Motor neuron (in vitro differentiated cells): ENCODE measurements at regions of chr6 and their contacts with region 1.

Region 1: GRCh38 chr6:156776840-156777576 is at the start of gene ARID1B:
- ATAC-seq: peak; percentile 54 to 67 (median 64)
- H3K4me3 ChIP-seq: peak within 1 kb of the TSS; percentile 65 to 98 (median 95)
- H3K27ac ChIP-seq: peak within 1 kb of the TSS; percentile 98 to 99
- H3K4me1 ChIP-seq: peaks cover 24 to 26% of the 10 kb centered on the region in 2 donors
- total RNA-seq, gene ARID1B: 35.8 to 165 (median 54.9) TPM

Region 2: GRCh38 chr6:156662025-156662445 is 115.0 kb before region 1 on chr6:
- in situ Hi-C with region 1: no loop called
- ATAC-seq: peak in 3 of 8 experiments; percentile 37 to 74 (median 65)
- H3K4me3 ChIP-seq: no peak overlapping the region
- H3K27ac ChIP-seq: no peak overlapping the region
- H3K4me1 ChIP-seq: peaks cover 13 to 16% of the 10 kb centered on the region in 2 donors

Region 3: GRCh38 chr6:156933201-156934068 is 156.4 kb after region 1 on chr6:
- in situ Hi-C with region 1: loop called in 1 of 9 experiments (anchors 25 kb)
- ATAC-seq: peak in 6 of 8 experiments; percentile 50 to 96 (median 96)
- H3K4me3 ChIP-seq: peak overlapping the region in 1 of 5 donors; percentile 14
- H3K27ac ChIP-seq: peak overlapping the region in 1 of 2 donors; percentile 4
- H3K4me1 ChIP-seq: peaks cover 10 to 19% of the 10 kb centered on the region in 2 donors

Region 4: DNA sequence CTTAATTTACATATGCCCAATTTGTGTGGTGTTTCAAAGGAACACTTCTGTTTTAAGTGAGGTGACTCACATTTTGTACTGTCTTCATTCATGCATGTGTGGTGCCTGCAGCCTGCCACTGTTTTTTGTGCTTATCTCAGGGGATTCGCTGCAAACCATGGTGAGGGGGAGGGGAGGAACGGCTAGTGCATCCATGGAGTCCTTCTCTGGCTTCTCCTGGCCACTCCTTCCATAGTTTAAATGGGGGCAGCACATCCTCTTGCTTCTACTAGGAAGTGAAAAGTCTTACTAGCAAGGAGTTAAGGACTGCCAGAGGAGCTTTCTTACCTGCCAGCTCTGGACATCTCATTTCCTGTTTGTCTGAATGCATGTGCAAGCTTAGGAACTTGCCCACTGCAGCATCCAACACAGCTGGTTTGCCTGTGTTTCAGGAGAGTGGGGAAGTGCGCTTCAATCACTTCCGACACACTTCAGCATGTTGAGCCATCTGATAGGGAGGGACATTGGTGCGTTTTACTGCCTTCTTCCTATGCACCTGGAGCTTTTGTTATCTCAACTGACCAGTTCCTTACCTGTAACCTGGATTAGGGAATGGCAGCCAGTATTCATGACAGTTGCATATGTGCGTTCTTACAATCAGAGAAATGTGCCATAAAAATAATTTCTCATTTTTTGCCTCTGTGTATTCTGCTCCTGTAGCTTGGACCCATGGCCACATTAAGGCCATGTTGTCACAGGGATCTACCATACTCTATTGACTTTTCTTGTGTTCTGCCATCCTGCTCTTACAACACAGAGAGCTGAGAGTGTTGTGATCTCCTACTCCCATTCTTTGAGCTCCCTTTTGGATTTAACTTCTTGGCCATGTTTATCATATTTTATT is 211.5 kb after region 1 on chr6:
- in situ Hi-C with region 1: loop called in 1 of 9 experiments (anchors 25 kb)
- ATAC-seq: peak; percentile 79 to 96 (median 86)
- H3K4me3 ChIP-seq: no peak overlapping the region
- H3K27ac ChIP-seq: no peak overlapping the region
- H3K4me1 ChIP-seq: peaks cover 13% of the 10 kb centered on the region in 2 donors

Region 5: DNA sequence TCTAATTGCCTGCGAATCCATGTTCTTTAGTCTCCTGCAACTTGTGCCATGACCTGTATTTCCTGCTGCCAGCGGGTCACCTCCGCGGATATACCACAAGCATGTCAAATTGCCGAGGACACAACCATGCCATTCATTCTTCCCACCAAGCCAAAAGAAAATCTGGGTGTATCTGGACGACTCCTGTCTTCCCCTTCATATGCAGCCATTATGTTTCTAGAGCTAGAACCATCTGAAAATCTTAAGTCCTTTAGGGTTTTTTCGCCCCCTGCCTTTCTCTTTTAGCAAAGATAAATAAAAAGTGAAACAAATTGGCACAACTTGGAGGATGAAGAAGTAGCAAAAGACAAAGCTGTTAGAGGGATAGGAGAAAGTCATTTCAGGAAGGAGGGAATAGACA is 242.7 kb after region 1 on chr6:
- in situ Hi-C with region 1: no loop called
- ATAC-seq: no peak
- H3K4me3 ChIP-seq: no peak overlapping the region
- H3K27ac ChIP-seq: no peak overlapping the region
- H3K4me1 ChIP-seq: peaks cover 14 to 21% of the 10 kb centered on the region in 2 donors

Region 6: GRCh38 chr6:157034436-157035230 is 257.6 kb after region 1 on chr6:
- in situ Hi-C with region 1: loop called in 1 of 9 experiments (anchors 25 kb)
- ATAC-seq: peak in 3 of 8 experiments; percentile 9 to 32 (median 29)
- H3K4me3 ChIP-seq: no peak overlapping the region
- H3K27ac ChIP-seq: no peak overlapping the region
- H3K4me1 ChIP-seq: peaks cover 32 to 42% of the 10 kb centered on the region in 2 donors